ENCODE measurements at regions of chr1 and their contacts with region 1.

Region 1: DNA sequence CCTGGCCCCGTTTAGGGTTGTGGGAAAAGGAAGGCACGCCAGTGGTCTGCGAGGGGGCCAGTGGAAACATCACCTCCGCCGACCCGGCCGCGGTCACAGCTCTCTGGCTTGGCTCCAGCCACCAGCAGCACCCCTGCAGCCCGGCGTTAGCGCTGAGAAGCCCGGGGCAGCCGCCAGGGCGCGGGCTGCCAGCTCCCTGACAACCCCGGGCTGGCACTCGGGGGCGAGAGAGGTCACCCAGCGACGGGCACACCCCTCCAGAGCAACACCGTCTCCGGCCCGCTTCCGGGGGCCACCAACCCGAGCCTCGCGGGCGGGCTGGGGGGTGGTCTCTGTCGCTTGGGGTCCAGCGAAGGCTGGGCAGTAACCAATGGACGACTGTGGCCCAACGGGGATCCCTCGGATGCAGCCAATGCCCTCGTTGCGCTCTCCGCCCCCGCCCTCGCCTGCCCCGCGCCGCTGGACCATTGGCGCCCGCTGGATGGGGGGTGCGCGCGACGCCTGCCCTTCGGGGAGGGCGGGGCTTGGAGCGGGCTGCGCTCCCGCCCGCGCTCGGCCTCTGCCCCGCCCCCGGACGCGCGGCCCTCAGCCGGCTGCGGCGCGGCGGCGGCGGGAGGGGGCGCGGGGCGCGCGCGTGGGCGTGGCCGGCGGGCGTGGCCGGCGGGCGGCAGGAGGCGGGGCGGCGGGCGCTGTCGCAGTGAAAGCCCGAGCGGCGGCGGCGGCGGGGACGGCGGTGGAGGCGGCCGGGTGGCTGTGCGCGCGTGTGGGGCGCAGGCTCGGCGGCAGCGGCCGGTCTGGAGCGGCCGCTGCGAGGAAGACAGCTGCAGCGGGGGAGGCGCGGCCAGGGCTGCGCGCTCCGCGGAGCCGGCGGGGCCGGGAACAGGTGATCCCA is at the start of gene MAN1C1:
- DNase-seq: peak; percentile 85
- ATAC-seq: peak; percentile 60
- H3K4me3 Mint-ChIP-seq: peak within 1 kb of the TSS; percentile 76
- H3K27ac Mint-ChIP-seq: peak within 1 kb of the TSS; percentile 52
- H3K4me1 Mint-ChIP-seq: peaks cover 51% of the 10 kb centered on the region
- H3K27me3 Mint-ChIP-seq: peaks cover 11% of the 10 kb centered on the region
- total RNA-seq, gene MAN1C1: 10.0 to 10.1 TPM

Region 2: GRCh38 chr1:25543425-25544242 is 72.7 kb before region 1 on chr1 and contains the start of gene LDLRAP1:
- CTCF ChIA-PET with region 1: interaction called, 4 read pairs
- POLR2A ChIA-PET with region 1: no interaction called
- intact Hi-C with region 1: loop called in 1 of 2 experiments (anchors 1 kb)
- DNase-seq: peak; percentile 78
- ATAC-seq: peak; percentile 89
- H3K4me3 Mint-ChIP-seq: peak within 1 kb of the TSS; percentile 80
- H3K27ac Mint-ChIP-seq: peak within 1 kb of the TSS; percentile 75
- H3K4me1 Mint-ChIP-seq: peaks cover 34% of the 10 kb centered on the region
- H3K27me3 Mint-ChIP-seq: no peaks in the 10 kb centered on the region
- total RNA-seq, gene LDLRAP1: 13.0 to 14.6 TPM

Region 3: GRCh38 chr1:25631750-25632485 is 15.6 kb after region 1 on chr1:
- CTCF ChIA-PET with region 1: interaction called, 31 read pairs
- POLR2A ChIA-PET with region 1: no interaction called
- intact Hi-C with region 1: loop called in 1 of 2 experiments (anchors 1 kb)
- DNase-seq: no peak
- ATAC-seq: peak; percentile 18
- H3K4me3 Mint-ChIP-seq: peak overlapping the region; percentile 73
- H3K27ac Mint-ChIP-seq: peak overlapping the region; percentile 83
- H3K4me1 Mint-ChIP-seq: peaks cover 70% of the 10 kb centered on the region
- H3K27me3 Mint-ChIP-seq: no peaks in the 10 kb centered on the region

Region 4: DNA sequence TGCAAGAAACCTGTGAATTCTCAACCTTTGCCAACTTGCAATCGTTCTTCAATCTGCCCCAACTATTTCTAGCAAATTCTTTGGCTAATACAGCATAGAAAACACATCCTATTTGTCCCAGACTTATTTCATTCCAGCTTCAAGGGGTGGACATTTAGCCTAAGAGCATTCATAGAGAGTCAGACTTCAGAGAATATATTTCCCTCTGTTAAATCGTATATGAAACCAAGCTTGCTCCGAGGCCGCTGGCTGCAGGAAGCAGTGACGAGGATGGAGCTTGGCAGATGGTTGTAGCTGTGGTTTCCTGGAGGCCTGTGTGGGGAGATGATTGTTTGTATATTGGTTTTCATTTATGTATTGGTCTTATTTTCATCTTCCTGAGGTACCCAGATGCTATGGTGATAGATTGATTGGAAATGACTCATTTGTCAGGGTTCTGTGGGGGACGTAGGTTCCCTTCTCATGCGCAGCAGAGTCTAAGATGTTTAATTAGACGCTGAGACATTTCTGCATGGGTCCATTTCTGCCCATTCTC is 26.3 kb after region 1 on chr1:
- CTCF ChIA-PET with region 1: interaction called, 91 read pairs
- POLR2A ChIA-PET with region 1: interaction called, 7 read pairs
- intact Hi-C with region 1: loop called (anchors 1 kb)
- DNase-seq: peak; percentile 85
- ATAC-seq: peak; percentile 90
- H3K4me3 Mint-ChIP-seq: peak overlapping the region; percentile 69
- H3K27ac Mint-ChIP-seq: peak overlapping the region; percentile 85
- H3K4me1 Mint-ChIP-seq: peaks cover 80% of the 10 kb centered on the region
- H3K27me3 Mint-ChIP-seq: no peaks in the 10 kb centered on the region

Region 5: GRCh38 chr1:25695090-25695770 is 78.9 kb after region 1 on chr1:
- CTCF ChIA-PET with region 1: interaction called, 12 read pairs
- POLR2A ChIA-PET with region 1: no interaction called
- intact Hi-C with region 1: loop called in 1 of 2 experiments (anchors 5 kb)
- DNase-seq: no peak
- ATAC-seq: no peak
- H3K4me3 Mint-ChIP-seq: peak overlapping the region; percentile 43
- H3K27ac Mint-ChIP-seq: peak overlapping the region; percentile 70
- H3K4me1 Mint-ChIP-seq: peaks cover 56% of the 10 kb centered on the region
- H3K27me3 Mint-ChIP-seq: no peaks in the 10 kb centered on the region

Region 6: GRCh38 chr1:25774921-25775801 is 158.8 kb after region 1 on chr1:
- CTCF ChIA-PET with region 1: interaction called, 5 read pairs
- POLR2A ChIA-PET with region 1: no interaction called
- intact Hi-C with region 1: loop called in 1 of 2 experiments (anchors 2 kb)
- DNase-seq: peak; percentile 94
- ATAC-seq: peak; percentile 85
- H3K4me3 Mint-ChIP-seq: peak overlapping the region; percentile 57
- H3K27ac Mint-ChIP-seq: peak overlapping the region; percentile 84
- H3K4me1 Mint-ChIP-seq: peaks cover 80% of the 10 kb centered on the region
- H3K27me3 Mint-ChIP-seq: no peaks in the 10 kb centered on the region

Region 7: DNA sequence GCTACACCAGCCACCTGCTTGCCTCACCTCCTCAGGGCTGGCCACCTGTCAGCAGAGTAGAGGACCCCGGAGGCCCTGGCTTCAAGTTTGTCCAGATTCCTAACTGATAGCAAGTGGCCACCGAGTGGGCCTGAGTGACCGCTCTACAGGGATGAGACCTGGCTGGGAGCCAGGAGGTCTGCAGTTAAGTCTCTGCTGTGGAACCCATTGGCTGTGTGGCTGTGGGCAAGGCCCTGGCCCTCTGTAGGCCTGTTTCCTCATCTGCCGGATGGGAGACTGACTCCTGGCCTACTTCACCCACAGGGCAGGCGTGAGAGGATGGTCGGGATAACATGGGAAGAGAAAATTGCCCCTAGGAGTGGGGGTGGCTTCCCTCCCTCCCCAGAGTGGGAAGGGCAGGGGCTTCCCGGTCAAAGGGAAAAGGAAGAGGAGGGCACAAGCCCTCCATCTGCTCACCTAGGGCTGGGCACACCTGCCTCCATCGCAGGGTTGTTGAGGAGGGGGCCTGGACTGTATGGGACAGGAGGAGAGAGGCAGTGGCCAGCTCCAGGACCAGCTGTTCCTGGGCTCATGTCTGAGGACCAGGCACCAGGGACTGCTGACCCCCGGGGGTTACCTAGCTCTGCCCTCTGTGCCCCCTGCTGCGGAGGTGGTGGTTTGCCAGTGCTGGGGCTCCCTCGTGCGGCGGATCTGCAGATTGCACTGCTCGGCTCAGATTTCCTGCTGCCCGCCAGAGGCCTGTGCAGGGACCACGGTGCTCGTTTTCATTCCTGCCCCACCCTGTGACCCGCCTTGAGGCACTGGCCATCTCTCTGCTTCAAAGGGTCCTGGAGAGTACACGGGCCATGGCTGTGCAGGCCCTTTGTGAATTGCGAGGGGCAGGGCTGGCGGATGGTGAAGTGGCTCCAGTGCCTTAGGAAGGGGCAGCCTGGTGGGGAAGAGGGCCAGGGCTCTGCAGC is 194.3 kb after region 1 on chr1:
- CTCF ChIA-PET with region 1: interaction called, 13 read pairs
- POLR2A ChIA-PET with region 1: no interaction called
- intact Hi-C with region 1: no loop called
- DNase-seq: peak; percentile 89
- ATAC-seq: peak; percentile 86
- H3K4me3 Mint-ChIP-seq: no peak overlapping the region
- H3K27ac Mint-ChIP-seq: no peak overlapping the region
- H3K4me1 Mint-ChIP-seq: peaks cover 3% of the 10 kb centered on the region
- H3K27me3 Mint-ChIP-seq: no peaks in the 10 kb centered on the region

Measured in activated CD4-positive, alpha-beta T cell treated with anti-CD3 and anti-CD28 coated beads for 36 hours (primary cell).